H1 (cell line): ENCODE measurements at regions of chr14 and their contacts with region 1.

Region 1: DNA sequence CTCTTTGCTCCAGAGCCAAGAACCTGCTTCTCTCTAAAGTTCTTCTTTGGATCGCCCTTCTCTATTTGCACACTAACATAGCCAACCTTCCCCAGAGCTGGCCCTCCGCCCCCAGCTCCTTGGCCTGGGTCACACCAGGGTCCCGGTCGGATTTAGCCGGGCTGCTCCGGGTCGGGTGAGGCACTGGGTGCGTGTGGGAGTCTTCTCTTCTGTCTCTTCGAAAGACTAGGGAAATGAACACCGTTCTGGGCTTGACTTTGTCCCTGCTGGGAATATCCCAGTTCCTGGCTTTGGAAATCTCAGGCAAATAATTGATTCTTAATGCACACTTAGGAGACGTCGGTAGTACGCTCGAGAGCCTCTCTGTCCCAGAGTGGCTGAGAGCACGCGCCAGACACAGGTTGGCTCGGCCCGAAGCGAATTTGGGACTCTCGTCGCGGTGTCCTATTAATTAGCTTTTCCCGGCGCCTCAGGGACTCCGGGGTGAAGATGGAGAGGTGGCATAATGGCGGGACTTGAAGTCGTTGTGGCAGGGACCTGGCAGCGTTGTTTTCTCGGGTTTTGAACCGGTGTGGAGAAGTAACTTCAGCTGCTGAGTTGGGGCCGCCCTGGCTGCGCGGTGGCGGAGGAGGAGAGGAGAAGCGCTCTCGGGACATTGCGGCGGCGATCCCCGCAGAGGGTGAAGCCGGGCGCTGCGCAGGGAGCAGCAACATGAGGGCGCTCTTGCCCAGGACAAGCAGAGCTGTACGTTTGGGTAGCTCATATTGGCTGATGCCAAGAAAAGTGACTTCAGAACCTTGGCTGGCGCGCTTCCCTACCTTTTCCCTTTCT is 7.5 kb downstream of the FOXG1 start:
- DNase-seq: peak in 1 of 2 experiments; percentile 90
- H3K4me3 ChIP-seq: peak overlapping the region; percentile 6 to 53 (median 36); a peak in 6 of 8 replicates
- H3K27ac ChIP-seq: no peak overlapping the region
- H3K4me1 ChIP-seq: peaks cover 0 to 10% (median 5%) of the 10 kb centered on the region in 4 experiments; a peak in 5 of 7 replicates
- H3K27me3 ChIP-seq: peaks cover 48 to 100% (median 87%) of the 10 kb centered on the region in 4 experiments
- CTCF ChIP-seq: peak; percentile 85 to 98 (median 91)
- EP300 ChIP-seq: no peak
- POLR2A ChIP-seq: no peak
- RAD21 ChIP-seq: peak; percentile 95 to 98

Region 2: DNA sequence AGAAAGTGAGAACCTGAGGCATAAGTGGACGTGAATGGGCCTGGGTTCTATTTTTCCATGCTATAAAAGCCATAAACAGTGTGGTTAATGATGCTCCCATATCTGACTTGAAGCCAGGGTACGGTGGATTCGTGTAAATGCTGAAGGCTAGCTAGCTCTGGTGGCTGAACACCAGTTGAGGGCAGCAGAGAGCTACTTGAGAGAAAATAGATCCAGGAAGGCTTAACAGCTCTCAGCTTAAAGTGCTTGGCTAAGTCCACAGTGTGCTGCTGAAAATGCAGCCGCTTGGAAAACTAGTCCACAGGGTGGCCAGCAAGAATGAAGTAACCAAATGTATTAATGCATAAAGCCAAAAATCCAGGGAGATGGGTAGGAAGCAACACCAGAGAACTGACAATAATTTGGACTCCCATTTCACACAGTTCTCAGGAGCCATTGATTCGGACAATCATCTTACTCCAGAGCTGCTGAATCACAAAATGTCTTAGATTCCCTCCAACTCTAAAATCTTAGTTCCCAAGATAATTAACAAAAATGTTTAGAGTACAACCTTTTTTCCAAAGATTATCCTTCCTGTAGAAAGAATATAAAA is 22.5 kb before region 1 on chr14:
- CTCF ChIA-PET with region 1: interaction called, 45 read pairs
- POLR2A ChIA-PET with region 1: interaction called, 3 read pairs
- DNase-seq: peak in 1 of 2 experiments; percentile 72
- H3K4me3 ChIP-seq: no peak overlapping the region
- H3K27ac ChIP-seq: no peak overlapping the region
- H3K4me1 ChIP-seq: peaks cover 0 to 1% (median 0%) of the 10 kb centered on the region in 4 experiments; a peak in 3 of 7 replicates
- H3K27me3 ChIP-seq: peaks cover 18 to 23% (median 21%) of the 10 kb centered on the region in 4 experiments
- CTCF ChIP-seq: peak; percentile 51 to 94 (median 79)
- EP300 ChIP-seq: no peak
- POLR2A ChIP-seq: no peak
- RAD21 ChIP-seq: peak; percentile 71 to 82

Region 3: DNA sequence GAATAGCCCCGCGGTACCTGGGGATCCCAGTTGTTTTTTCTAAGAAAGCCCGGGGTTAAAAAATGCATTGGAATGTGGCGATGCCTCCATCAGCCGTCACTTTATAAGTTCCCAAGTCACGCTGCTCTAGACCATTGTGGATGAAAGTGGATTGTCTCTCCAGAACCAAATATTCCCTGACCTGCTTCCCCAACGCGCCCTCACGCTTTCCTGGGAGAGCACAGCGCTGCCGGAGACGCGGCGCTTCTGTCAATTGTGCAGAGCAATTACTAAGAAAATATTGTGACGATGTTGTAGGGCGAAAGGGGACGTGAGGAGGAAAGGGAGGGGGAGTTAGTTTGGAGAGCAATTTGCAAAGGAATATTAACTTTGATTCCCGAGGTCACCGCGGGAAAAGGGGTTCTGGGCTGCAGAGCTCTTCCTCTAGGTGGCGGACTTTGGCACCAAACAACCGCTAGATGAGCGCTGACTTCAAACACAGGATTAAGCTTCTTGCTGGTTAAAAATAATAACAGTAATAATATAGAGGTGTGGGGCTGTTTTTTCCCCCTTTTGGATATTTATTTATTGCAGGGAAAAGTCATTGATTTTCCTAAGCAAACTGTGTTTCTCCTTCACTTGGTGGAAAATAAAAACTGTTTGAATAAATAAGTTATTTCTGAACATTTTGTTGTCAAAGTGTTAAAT is 17.0 kb before region 1 on chr14:
- CTCF ChIA-PET with region 1: interaction called, 45 read pairs
- POLR2A ChIA-PET with region 1: interaction called, 4 read pairs
- DNase-seq: peak in 1 of 2 experiments; percentile 58
- H3K4me3 ChIP-seq: peak overlapping the region in 1 of 4 experiments; percentile 53; a peak in 2 of 8 replicates
- H3K27ac ChIP-seq: no peak overlapping the region
- H3K4me1 ChIP-seq: peaks cover 0 to 8% (median 4%) of the 10 kb centered on the region in 4 experiments; a peak in 5 of 7 replicates
- H3K27me3 ChIP-seq: peaks cover 69 to 77% (median 73%) of the 10 kb centered on the region in 4 experiments
- CTCF ChIP-seq: peak; percentile 69 to 74 (median 72)
- EP300 ChIP-seq: no peak
- POLR2A ChIP-seq: no peak
- RAD21 ChIP-seq: peak; percentile 46 to 50

Region 4: DNA sequence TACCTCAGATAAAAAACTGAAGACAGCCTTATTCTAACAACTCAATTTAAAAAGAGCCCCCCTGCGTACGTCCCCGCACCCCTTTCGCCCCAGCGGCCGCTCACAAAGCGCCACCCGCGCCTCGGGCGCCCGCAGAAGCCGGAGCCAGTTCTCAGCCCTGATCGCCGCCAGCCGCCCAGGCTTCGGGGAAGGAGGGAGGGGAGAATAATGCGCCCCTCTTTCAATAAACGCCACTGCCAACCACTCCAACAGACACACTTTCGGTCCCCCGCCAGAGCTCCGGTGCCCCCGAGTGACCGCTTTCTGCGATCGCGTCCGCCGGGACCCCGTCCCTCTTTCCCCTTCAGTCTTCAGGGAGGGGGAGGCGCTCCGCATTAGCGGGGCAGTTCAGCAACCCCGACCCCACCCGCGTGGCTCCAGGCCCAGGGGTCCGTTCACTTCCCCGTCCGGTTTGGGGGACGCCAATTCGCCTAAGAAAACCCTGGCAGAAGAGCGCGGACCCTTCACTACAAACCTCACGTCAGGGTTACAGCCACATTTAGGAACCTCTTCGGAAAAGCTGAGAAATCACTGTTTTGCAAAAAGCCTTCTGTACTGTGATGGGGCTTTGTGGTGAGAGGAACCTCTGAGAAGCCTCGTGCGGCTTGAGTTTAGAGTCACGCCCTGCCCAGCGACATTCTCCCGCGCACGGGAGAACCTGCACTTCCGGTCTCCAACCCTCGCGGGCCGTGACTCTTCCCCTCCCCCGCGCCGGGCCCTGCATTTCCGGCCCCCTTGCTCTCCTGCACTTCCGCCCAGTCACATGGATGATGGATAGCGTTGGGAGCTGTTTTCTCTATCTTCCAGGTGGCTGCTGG is 11.2 kb after region 1 on chr14:
- CTCF ChIA-PET with region 1: interaction called, 36 read pairs
- POLR2A ChIA-PET with region 1: no interaction called
- DNase-seq: peak in 1 of 2 experiments; percentile 76
- H3K4me3 ChIP-seq: peak overlapping the region; percentile 50 to 69 (median 62)
- H3K27ac ChIP-seq: no peak overlapping the region
- H3K4me1 ChIP-seq: peaks cover 4 to 8% (median 4%) of the 10 kb centered on the region in 4 experiments; a peak in 5 of 7 replicates
- H3K27me3 ChIP-seq: peaks cover 3 to 51% (median 32%) of the 10 kb centered on the region in 4 experiments
- CTCF ChIP-seq: no peak
- EP300 ChIP-seq: no peak
- POLR2A ChIP-seq: 0 out of 3 replicates have a peak, but pooled peaks of 1 of the 2 experiments have one; percentile 30
- RAD21 ChIP-seq: no peak

Region 5: DNA sequence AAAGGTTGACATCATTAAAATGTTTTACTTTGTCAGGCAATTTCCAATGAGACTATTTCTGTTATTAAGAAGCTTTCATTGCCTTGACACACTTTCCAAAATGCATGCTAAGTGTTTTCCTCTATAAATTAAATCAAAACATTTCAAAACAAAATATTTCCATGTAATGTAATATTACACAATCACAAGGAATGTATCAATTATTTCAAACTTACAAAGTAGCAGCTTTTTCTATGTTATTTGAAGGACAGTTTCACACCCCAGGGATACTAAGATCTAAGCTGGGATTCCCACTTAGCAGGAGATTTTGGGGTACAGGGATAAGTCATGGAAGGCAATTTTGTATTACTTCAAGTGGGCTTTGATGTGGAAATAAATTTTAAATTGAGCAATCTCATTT is 137.4 kb after region 1 on chr14:
- CTCF ChIA-PET with region 1: no interaction called
- POLR2A ChIA-PET with region 1: no interaction called
- DNase-seq: no peak
- H3K4me3 ChIP-seq: no peak overlapping the region
- H3K27ac ChIP-seq: no peak overlapping the region
- H3K4me1 ChIP-seq: no peaks in the 10 kb centered on the region
- H3K27me3 ChIP-seq: no peaks in the 10 kb centered on the region
- CTCF ChIP-seq: no peak
- EP300 ChIP-seq: no peak
- POLR2A ChIP-seq: no peak
- RAD21 ChIP-seq: no peak

Region 6: DNA sequence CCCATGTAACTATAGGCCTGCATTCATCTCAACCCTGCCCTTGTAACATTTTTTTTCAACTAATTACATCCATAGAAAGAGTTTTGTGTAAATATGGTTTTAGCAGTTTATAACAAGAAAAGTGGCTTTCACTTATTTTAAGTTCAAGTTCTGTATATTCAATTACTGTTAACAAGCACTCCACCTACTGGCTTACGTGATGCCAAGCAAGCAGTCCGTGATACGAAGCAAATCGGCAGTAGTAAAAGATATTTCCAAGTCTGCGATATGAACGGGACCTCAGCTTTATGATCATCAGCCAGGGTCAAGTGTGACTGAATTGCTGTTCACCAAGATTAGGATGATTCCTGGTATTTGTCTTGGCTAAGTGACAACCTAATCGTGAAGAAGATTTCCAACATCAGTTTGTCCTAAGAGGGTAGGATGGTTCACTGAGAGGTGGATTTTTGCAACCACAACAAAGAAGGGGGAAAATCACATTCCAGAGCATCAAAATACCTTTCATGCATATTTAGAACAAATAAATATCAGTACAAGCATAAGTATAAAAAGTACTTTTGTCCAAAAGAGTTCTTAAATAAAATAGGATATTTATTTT is 448.7 kb after region 1 on chr14:
- CTCF ChIA-PET with region 1: interaction called, 17 read pairs
- POLR2A ChIA-PET with region 1: no interaction called
- DNase-seq: no peak
- H3K4me3 ChIP-seq: no peak overlapping the region
- H3K27ac ChIP-seq: no peak overlapping the region
- H3K4me1 ChIP-seq: no peaks in the 10 kb centered on the region
- H3K27me3 ChIP-seq: no peaks in the 10 kb centered on the region
- CTCF ChIP-seq: peak in 2 of 3 experiments; percentile 56 to 70; a peak in 3 of 4 replicates
- EP300 ChIP-seq: no peak
- POLR2A ChIP-seq: no peak
- RAD21 ChIP-seq: peak; percentile 66 to 72

Region 7: DNA sequence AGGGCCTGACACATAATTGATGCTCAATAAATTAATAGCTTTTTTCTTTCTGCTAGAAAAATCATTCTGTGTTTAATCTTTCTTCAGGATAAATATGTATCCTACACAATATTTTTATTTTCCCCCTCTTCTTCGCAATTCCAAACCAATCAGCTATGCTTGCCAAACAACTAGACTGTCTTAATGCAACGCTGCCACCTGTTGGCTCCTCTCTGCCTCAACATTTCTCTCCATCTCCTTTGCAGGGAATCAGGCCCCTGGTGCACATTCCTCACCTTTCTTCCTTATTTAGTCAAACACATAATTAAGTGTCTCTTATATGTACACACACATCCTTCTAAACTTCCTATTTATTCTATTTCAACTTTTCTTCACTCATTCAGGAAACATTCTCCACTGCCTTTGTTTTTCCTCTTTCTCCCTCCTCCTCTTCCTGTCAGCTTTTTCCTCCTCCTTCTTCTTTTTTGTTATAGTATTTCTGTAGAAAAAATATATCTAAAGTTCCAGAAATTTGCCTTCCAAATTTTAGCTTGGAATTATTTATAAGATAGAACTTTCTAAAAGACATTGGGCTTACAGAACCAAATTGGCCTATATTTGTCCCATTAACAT is 747.6 kb after region 1 on chr14:
- CTCF ChIA-PET with region 1: interaction called, 21 read pairs
- POLR2A ChIA-PET with region 1: no interaction called
- DNase-seq: peak; percentile 21 to 56
- H3K4me3 ChIP-seq: no peak overlapping the region
- H3K27ac ChIP-seq: no peak overlapping the region
- H3K4me1 ChIP-seq: no peaks in the 10 kb centered on the region
- H3K27me3 ChIP-seq: no peaks in the 10 kb centered on the region
- CTCF ChIP-seq: peak; percentile 52 to 82 (median 67)
- EP300 ChIP-seq: no peak
- POLR2A ChIP-seq: no peak
- RAD21 ChIP-seq: peak; percentile 86 to 89